K562 (cell line): ENCODE measurements at regions of chr10 and their contacts with region 1.

Region 1: DNA sequence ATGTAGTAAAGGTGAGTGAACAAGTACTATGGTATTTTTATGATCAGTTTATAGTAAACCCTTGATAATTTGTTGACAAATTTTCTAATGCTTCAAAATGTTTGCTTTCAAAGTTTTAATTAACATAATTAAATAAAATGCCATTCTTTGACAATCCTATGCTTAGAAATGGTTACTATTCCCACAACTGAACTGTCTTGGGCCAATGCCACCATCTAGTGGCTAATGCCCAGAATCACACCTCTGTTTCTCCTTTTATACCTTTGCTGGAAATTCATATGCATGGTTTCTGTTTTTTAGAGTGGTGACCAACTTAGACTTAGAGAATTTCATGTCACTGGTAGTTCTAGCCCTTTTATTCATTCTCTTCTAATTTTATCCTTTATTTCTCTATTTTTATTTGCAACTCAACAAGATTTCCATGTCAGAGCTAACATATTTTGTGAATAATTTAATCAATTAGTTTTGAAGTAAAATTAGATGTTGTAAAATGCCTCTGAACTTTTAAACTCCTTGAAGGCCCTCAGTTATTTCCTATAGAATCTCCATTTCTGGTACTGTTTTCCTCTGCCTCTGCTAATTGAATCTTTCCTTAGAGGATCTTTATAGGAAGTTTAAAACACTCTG is 31.1 kb downstream of the PCGF5 start:
- DNase-seq: peak; percentile 33 to 60 (median 41)
- ATAC-seq: peak; percentile 57; the same call in 1 of the 3 replicates
- H3K4me3 ChIP-seq: no peak overlapping the region
- H3K27ac ChIP-seq: no peak overlapping the region
- H3K4me1 ChIP-seq: peaks cover 0 to 6% of the 10 kb centered on the region in 2 experiments; a peak in 2 of 5 replicates
- H3K27me3 ChIP-seq: no peaks in the 10 kb centered on the region
- CTCF ChIP-seq: peak; percentile 63 to 74 (median 68)
- EP300 ChIP-seq: no peak
- POLR2A ChIP-seq: no peak
- RAD21 ChIP-seq: peak; percentile 88 to 90

Region 2: GRCh38 chr10:90912174-90912573 is 339.4 kb before region 1 on chr10:
- CTCF ChIA-PET with region 1: no interaction called
- POLR2A ChIA-PET with region 1: interaction called, 3 read pairs
- in situ Hi-C with region 1: no loop called
- intact Hi-C with region 1: loop called (anchors 1 kb)
- DNase-seq: no peak
- ATAC-seq: no peak
- H3K4me3 ChIP-seq: no peak overlapping the region
- H3K27ac ChIP-seq: no peak overlapping the region
- H3K4me1 ChIP-seq: no peaks in the 10 kb centered on the region; a peak in 1 of 5 replicates
- H3K27me3 ChIP-seq: peaks cover 4 to 5% of the 10 kb centered on the region in 2 experiments; a peak in 2 of 5 replicates
- CTCF ChIP-seq: no peak
- EP300 ChIP-seq: no peak
- POLR2A ChIP-seq: no peak
- RAD21 ChIP-seq: no peak

Region 3: GRCh38 chr10:91006001-91006751 is 245.4 kb before region 1 on chr10:
- CTCF ChIA-PET with region 1: interaction called, 23 read pairs
- POLR2A ChIA-PET with region 1: no interaction called
- in situ Hi-C with region 1: loop called (anchors 10 kb)
- intact Hi-C with region 1: loop called (anchors 1 kb)
- DNase-seq: peak; percentile 41 to 66 (median 45)
- ATAC-seq: peak; percentile 78
- H3K4me3 ChIP-seq: no peak overlapping the region
- H3K27ac ChIP-seq: no peak overlapping the region
- H3K4me1 ChIP-seq: no peaks in the 10 kb centered on the region
- H3K27me3 ChIP-seq: no peaks in the 10 kb centered on the region
- CTCF ChIP-seq: peak; percentile 69 to 85 (median 80)
- EP300 ChIP-seq: no peak
- POLR2A ChIP-seq: no peak
- RAD21 ChIP-seq: peak; percentile 81 to 87

Region 4: DNA sequence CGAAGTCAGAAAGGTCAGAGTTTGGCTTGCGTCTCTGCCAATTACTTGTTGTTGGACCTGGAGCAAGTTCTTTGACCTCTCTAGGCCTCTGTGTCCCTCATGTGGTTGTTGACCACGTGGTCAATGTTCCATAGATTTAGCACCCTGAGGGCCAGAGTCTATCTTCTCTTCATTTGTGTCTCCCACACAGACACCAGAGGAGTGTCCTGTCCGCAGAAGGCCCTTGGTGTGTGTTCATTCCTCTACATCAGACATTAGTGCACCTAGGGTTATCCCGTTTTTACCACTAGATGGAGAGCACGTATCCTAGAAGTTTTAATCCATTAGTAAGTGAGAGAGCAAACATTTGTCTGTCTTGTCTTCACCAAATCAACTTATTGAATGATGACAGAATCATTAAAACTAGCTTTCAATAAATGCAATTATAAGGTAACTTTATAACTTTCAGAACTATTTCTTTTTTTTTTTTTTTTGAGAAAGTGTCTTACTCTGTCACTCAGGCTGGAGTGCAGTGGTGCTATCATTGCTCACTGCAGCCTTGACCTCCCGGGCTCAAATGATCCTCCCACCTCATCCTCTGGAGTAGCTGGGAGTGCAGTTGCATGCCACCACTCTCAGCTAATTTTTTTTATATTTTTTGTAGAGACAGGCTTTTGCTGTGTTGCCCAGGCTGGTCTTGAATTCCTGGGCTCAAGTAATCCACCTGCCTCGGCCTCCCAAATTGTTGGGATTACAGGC is 208.2 kb before region 1 on chr10:
- CTCF ChIA-PET with region 1: interaction called, 18 read pairs
- POLR2A ChIA-PET with region 1: interaction called, 3 read pairs
- in situ Hi-C with region 1: no loop called
- intact Hi-C with region 1: loop called (anchors 1 kb)
- DNase-seq: peak; percentile 10 to 46 (median 25)
- ATAC-seq: peak; percentile 90
- H3K4me3 ChIP-seq: no peak overlapping the region
- H3K27ac ChIP-seq: no peak overlapping the region
- H3K4me1 ChIP-seq: no peaks in the 10 kb centered on the region
- H3K27me3 ChIP-seq: no peaks in the 10 kb centered on the region
- CTCF ChIP-seq: peak; percentile 38 to 60 (median 54); a peak in 4 of 6 replicates
- EP300 ChIP-seq: no peak
- POLR2A ChIP-seq: no peak
- RAD21 ChIP-seq: peak; percentile 54 to 76

Region 5: DNA sequence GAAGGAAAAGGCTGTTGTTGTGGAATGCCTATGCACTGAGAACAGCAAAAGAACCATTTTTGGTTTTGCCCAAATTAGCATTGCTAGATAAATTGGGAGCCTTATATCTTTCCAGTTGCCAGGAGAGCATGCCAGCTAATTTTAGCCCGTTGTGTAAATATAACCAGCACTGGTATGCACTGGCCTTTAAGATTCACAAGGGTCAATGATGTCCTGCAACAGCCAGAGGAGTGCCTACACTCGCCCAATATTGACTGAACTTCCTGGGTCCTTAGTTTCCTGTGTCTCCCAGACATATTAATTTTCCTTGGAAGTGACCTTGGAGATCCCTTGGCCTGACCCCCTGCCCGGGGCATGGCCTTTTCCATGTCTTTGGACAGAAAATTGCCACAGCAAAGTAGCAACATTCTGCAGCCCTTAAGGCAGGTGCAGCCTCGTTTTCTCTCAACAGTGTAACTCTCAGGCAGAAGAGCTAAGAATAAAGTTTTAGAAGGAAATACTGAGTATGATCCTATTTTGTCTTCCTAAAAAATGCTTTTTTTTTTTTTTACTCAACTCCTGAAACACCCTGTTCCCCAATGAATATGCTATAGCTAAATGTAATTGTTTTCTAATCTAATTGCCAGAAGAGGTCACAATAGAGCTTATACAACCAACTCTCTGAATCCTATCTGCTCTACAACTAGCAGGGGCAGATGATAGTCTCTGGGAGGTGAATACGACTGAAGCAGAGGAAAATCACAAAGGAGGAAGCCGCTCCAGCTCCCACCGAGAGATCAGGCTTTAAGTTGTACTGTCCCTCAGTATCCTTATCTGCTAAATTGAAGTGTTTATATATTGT is 163.0 kb before region 1 on chr10:
- CTCF ChIA-PET with region 1: interaction called, 8 read pairs
- POLR2A ChIA-PET with region 1: no interaction called
- in situ Hi-C with region 1: no loop called
- intact Hi-C with region 1: loop called (anchors 2 kb)
- DNase-seq: peak in 2 of 4 experiments; percentile 26 to 36
- ATAC-seq: peak; percentile 70
- H3K4me3 ChIP-seq: no peak overlapping the region
- H3K27ac ChIP-seq: no peak overlapping the region
- H3K4me1 ChIP-seq: no peaks in the 10 kb centered on the region
- H3K27me3 ChIP-seq: no peaks in the 10 kb centered on the region
- CTCF ChIP-seq: peak; percentile 5 to 52 (median 10); a peak in 3 of 6 replicates
- EP300 ChIP-seq: no peak
- POLR2A ChIP-seq: no peak
- RAD21 ChIP-seq: peak; percentile 51 to 61

Region 6: DNA sequence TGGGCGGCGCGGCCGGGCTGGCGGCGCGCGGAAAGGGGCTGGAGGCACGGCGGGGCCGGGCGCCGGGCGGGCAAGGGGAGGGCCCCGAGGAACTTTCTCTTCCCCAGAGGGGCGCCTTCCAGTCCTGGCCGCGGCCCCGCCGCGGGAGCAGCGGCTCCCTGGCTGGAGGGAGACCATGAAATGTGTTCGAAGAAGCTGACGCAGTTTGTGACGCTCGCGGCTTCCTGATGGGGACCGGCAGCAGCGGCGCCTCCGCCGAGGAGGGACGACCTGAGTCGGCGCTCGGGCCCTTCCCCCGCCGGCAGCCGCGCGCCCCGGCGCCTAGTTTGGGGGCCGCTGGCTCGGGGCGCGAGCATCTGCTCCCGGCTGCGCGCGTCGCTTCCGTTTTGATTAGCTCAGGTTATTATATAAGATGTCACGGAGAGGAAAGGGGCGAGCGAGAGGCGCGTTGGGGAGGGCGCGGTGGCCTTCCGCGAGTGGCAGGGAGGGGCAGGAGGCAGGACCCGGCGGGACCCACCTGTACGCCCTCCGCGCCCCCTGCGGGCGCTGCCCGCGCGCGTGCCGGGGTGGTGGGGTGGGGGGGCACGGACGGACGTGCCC is 88.2 kb before region 1 on chr10:
- CTCF ChIA-PET with region 1: no interaction called
- POLR2A ChIA-PET with region 1: no interaction called
- in situ Hi-C with region 1: no loop called
- intact Hi-C with region 1: loop called (anchors 5 kb)
- DNase-seq: peak; percentile 42 to 53 (median 45)
- ATAC-seq: peak; percentile 75
- H3K4me3 ChIP-seq: peak overlapping the region; percentile 78
- H3K27ac ChIP-seq: peak overlapping the region; percentile 81
- H3K4me1 ChIP-seq: peaks cover 8 to 16% of the 10 kb centered on the region in 2 experiments; a peak in 4 of 5 replicates
- H3K27me3 ChIP-seq: no peaks in the 10 kb centered on the region
- CTCF ChIP-seq: no peak
- EP300 ChIP-seq: no peak
- POLR2A ChIP-seq: no peak; the same call in 1 of the 2 replicates
- RAD21 ChIP-seq: no peak

Region 7: GRCh38 chr10:91210435-91210834 is 41.1 kb before region 1 on chr10:
- CTCF ChIA-PET with region 1: no interaction called
- POLR2A ChIA-PET with region 1: no interaction called
- in situ Hi-C with region 1: no loop called
- intact Hi-C with region 1: loop called (anchors 5 kb)
- DNase-seq: no peak
- ATAC-seq: no peak
- H3K4me3 ChIP-seq: no peak overlapping the region
- H3K27ac ChIP-seq: no peak overlapping the region
- H3K4me1 ChIP-seq: peaks cover 0 to 6% of the 10 kb centered on the region in 2 experiments; a peak in 2 of 5 replicates
- H3K27me3 ChIP-seq: no peaks in the 10 kb centered on the region
- CTCF ChIP-seq: no peak
- EP300 ChIP-seq: no peak
- POLR2A ChIP-seq: no peak
- RAD21 ChIP-seq: no peak

Region 8: GRCh38 chr10:91354166-91355075 is 102.9 kb after region 1 on chr10:
- CTCF ChIA-PET with region 1: no interaction called
- POLR2A ChIA-PET with region 1: no interaction called
- in situ Hi-C with region 1: no loop called
- intact Hi-C with region 1: no loop called
- DNase-seq: no peak
- ATAC-seq: no peak
- H3K4me3 ChIP-seq: no peak overlapping the region
- H3K27ac ChIP-seq: no peak overlapping the region
- H3K4me1 ChIP-seq: no peaks in the 10 kb centered on the region
- H3K27me3 ChIP-seq: no peaks in the 10 kb centered on the region; a peak in 2 of 5 replicates
- CTCF ChIP-seq: no peak
- EP300 ChIP-seq: no peak
- POLR2A ChIP-seq: no peak
- RAD21 ChIP-seq: no peak

Region 9: DNA sequence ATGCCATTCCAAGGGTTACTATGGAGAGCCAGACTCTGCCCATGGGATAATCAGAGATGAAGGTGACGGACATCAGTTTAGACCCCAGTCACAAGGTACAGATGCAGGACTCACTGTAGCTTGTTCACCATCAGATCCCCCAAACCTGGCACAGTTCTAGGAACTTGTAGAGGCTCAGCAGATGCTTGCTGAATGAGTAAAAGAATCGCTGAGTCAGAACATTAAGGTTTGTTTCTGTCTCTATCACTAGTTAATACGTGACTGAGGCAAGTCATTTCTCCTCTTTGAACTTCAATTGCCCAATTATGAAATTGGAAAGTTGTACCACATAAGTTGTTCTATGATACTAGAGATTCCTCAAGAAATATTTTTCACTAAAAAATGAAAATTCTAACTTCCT is 316.3 kb after region 1 on chr10:
- CTCF ChIA-PET with region 1: no interaction called
- POLR2A ChIA-PET with region 1: no interaction called
- in situ Hi-C with region 1: no loop called
- intact Hi-C with region 1: no loop called
- DNase-seq: no peak
- ATAC-seq: no peak
- H3K4me3 ChIP-seq: no peak overlapping the region
- H3K27ac ChIP-seq: no peak overlapping the region
- H3K4me1 ChIP-seq: peaks cover 0 to 17% of the 10 kb centered on the region in 2 experiments; a peak in 4 of 5 replicates
- H3K27me3 ChIP-seq: no peaks in the 10 kb centered on the region
- CTCF ChIP-seq: no peak
- EP300 ChIP-seq: no peak
- POLR2A ChIP-seq: no peak
- RAD21 ChIP-seq: no peak